ENCODE measurements at regions of chr6 and their contacts with region 1.

Region 1: DNA sequence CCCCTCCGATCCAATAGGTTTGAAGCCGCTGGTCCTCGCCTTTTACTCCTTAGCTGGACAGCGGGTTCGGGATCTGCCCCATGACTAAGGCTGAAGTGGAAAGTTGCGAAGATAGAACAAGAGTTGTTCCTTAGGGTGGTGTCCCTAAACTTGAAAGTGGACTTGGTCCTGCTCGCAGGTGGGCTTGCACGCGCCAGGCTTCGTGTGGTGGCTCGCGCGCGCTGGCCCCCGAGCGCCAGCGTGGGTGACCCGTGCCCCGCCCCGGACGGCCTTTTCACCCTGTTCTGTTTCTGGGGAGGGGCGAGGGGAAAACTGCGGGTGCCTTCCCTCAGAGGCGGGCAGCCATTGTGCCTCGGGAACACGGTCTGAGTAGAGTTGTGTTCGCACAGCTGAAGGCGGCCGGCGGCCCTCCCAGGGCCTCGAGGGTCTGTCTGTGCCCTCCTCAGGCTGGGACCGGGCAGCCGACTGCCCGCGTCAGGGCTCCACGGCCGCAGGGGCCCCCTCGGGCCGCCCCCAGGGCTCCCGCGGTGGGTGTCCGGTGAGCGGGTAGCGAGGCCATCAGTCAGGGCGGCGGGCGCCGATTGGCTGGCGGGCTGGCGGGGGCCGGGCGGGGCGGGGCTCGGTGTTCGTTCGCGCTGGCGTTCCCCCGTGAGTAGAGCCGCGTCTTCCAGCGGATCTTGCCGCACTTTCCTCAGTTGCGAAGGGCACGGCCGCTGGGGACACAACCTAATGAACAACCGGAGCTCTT is 33.0 kb downstream of the RREB1 start:
- DNase-seq: peak; percentile 59 to 86 (median 78)
- ATAC-seq: peak; percentile 74 to 81
- H3K4me3 Mint-ChIP-seq: peak overlapping the region; percentile 80 to 92 (median 88)
- H3K27ac Mint-ChIP-seq: peak overlapping the region; percentile 80 to 97 (median 94)
- H3K4me1 Mint-ChIP-seq: peaks cover 28 to 79% (median 62%) of the 10 kb centered on the region in 4 donors
- H3K27me3 Mint-ChIP-seq: no peaks in the 10 kb centered on the region

Region 2: DNA sequence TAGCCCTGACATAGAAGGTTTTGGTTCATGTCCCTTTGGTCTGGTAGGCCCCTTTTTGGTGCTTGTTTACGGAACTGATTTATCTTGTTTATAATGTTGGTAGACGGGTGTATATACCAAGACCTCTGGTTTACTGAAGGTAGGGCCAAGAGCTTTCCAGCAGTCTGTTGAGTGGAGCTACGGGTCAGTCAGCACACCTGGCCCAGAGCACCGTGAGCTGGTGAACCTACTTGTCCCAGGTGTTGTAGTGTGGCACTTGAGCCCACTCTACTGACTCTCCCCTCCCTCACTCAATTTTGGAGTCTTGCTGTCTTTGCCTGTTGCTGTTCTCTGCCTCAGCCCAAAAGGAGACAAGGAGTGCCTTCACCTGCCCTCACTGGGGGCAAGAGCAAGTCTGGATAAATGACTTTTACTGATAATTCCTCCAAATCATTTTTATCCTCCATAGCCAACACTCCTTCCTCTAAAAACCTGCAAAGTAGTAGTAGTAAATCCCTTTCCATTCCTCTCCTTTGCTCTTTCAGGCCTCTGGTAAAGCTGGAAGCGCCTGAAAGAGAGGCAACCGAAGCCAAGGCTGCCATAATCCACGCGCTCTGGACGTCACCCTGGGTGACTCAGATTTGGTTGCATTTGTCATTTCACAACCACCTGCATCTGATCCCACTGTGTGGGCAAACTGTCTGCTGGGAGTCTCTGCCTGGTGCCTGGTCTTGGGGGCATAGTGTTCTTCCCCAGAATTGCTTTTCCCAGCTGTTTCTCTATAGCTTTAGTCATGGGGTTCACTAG is 10.8 kb before region 1 on chr6:
- POLR2A ChIA-PET with region 1: interaction called, 11 read pairs
- DNase-seq: no peak
- ATAC-seq: no peak
- H3K4me3 Mint-ChIP-seq: peak overlapping the region in 9 of 10 donors; percentile 36 to 77 (median 66)
- H3K27ac Mint-ChIP-seq: peak overlapping the region; percentile 45 to 96 (median 90)
- H3K4me1 Mint-ChIP-seq: peaks cover 52 to 90% (median 82%) of the 10 kb centered on the region in 4 donors
- H3K27me3 Mint-ChIP-seq: no peaks in the 10 kb centered on the region